Activated T-helper 1 cell treated with anti-CD3 and anti-CD28 coated beads, Interleukin-12 subunit alpha, Interleukin-12 subunit beta, Interleukin-2, Interleukin-4 antibody, amounts not matched to agents 30 ng/mL and 10 ng/mL and 1 ng/mL, durations not matched to agents 14 hours and 24 hours and 36 hours (primary cell): ENCODE measurements at regions of chr17 and their contacts with region 1.

Region 1: GRCh38 chr17:604765-605164 is 109.9 kb downstream of the VPS53 start:
- DNase-seq: no peak
- H3K4me3 Mint-ChIP-seq: no peak overlapping the region
- H3K27ac Mint-ChIP-seq: no peak overlapping the region
- H3K4me1 Mint-ChIP-seq: peaks cover 5% of the 10 kb centered on the region
- H3K27me3 Mint-ChIP-seq: no peaks in the 10 kb centered on the region

Region 2: GRCh38 chr17:574061-574460 is 30.7 kb before region 1 on chr17:
- intact Hi-C with region 1: loop called (anchors 1 kb)
- DNase-seq: no peak
- H3K4me3 Mint-ChIP-seq: no peak overlapping the region
- H3K27ac Mint-ChIP-seq: no peak overlapping the region
- H3K4me1 Mint-ChIP-seq: no peaks in the 10 kb centered on the region
- H3K27me3 Mint-ChIP-seq: peaks cover 1% of the 10 kb centered on the region